ENCODE measurements at regions of chr1 and their contacts with region 1.

Region 1: GRCh38 chr1:26695356-26696118 is at the start of gene ARID1A:
- DNase-seq: peak; percentile 97
- H3K4me3 Mint-ChIP-seq: peak within 1 kb of the TSS; percentile 86
- H3K27ac Mint-ChIP-seq: peak within 1 kb of the TSS; percentile 98
- H3K4me1 Mint-ChIP-seq: peaks cover 25% of the 10 kb centered on the region
- H3K27me3 Mint-ChIP-seq: no peaks in the 10 kb centered on the region
- total RNA-seq, gene ARID1A: 64.3 to 67.8 TPM

Region 2: DNA sequence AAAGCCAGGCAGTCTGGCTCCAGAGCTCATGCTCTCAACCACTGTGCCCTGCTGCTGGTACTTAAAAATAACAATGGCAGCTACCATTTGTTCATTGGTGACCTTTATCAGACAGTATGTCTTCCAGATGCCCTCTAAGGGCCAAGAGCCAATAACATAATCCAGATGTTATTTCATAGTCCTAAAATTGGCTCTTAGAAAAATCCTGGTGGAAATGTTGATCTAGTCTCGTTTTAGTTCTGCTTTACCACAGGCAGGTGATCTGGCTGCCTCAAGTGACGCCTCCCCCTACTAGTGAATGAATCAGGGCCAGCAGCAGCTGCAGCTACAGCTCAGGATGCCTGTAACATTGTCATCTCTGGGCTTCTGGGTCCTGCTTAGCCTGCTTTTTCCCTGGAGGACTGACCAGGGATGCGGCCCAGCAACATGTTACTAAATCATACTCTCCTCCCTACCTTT is 235.9 kb before region 1 on chr1:
- CTCF ChIA-PET with region 1: no interaction called
- POLR2A ChIA-PET with region 1: no interaction called
- intact Hi-C with region 1: no loop called
- DNase-seq: no peak
- H3K4me3 Mint-ChIP-seq: no peak overlapping the region
- H3K27ac Mint-ChIP-seq: no peak overlapping the region
- H3K4me1 Mint-ChIP-seq: no peaks in the 10 kb centered on the region
- H3K27me3 Mint-ChIP-seq: no peaks in the 10 kb centered on the region

Region 3: DNA sequence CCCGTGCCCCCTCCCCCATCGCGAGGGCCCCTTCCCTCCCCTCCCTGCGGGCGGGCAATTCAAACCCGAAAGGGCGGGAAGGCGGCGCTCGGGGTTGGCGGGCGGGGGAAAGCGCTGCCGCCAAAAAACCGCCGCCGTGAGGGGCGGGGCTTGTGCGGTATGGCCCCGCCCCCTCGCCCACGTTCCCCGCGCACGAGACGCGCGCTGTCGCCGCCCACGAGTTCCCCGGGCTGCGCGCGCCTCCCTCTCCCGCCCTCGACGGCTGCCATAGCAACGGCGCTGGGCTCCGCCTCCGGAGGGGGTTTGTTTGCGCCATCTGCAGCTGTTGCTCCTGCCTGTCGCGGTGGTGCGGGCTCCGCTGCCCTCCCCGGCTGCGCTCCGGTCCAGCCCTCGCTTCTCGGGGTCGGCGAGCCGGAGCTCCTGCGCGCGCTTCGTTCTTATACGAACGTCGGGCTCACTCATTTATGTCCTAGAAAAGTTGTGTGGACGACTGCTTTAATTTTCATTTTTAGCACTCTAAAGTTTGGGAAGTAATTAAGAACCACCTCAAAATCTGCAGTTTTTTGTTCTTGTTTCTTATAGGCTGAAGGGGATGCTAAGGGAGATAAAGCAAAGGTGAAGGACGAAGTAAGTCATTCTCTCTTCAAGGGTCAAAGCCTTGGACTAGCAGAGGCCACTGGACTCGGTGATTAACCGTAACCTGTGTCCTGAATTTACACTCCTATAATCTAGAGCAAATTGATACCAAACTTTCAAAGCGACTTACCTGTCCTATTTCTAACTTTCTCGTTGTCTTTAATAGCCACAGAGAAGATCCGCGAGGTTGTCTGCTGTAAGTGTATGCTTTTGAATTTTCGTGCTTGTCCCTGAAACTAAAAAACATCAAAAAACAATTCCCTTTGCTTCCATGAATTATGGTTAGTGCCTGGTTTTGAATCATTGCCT is 222.4 kb before region 1 on chr1:
- CTCF ChIA-PET with region 1: no interaction called
- POLR2A ChIA-PET with region 1: no interaction called
- intact Hi-C with region 1: no loop called
- DNase-seq: peak; percentile 97
- H3K4me3 Mint-ChIP-seq: peak overlapping the region; percentile 89
- H3K27ac Mint-ChIP-seq: peak overlapping the region; percentile 74
- H3K4me1 Mint-ChIP-seq: peaks cover 50% of the 10 kb centered on the region
- H3K27me3 Mint-ChIP-seq: no peaks in the 10 kb centered on the region

Region 4: DNA sequence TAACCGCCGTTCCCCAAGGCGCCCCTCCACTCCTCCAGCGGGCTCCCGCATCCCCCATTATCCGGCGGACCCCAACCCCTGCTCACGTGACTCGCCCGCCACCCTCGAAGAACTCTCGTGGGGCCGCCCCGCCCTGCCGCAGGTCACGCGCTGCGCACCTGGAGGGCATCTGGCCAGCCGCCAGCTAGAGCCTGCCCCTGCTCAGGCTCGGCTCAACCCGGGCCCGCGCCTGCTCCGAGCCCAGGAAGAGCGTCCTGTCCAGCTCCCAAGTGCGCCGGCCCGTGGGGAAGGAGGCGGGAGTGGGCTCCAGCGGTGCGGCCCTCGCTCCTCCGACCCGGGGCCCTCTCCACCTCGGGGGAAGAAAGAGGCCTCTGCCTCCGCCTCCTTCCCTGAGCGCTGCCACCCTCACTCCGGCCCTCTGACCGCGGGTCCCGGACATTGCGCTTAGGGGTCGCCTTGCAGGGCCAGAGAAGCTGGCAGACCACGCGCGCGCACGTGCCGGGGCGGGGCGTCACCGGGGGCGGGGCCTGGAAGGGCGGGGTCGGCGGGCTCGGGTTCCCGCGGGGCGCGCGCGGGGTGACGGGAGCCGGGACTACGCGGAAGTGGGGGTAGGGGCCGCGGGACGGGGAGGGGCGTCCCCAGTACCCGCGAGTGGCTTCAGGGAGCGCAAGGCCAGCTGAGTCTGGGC is 194.9 kb before region 1 on chr1:
- CTCF ChIA-PET with region 1: interaction called, 11 read pairs
- POLR2A ChIA-PET with region 1: interaction called, 8 read pairs
- intact Hi-C with region 1: no loop called
- DNase-seq: peak; percentile 93
- H3K4me3 Mint-ChIP-seq: peak overlapping the region; percentile 88
- H3K27ac Mint-ChIP-seq: peak overlapping the region; percentile 93
- H3K4me1 Mint-ChIP-seq: peaks cover 8% of the 10 kb centered on the region
- H3K27me3 Mint-ChIP-seq: no peaks in the 10 kb centered on the region

Region 5: DNA sequence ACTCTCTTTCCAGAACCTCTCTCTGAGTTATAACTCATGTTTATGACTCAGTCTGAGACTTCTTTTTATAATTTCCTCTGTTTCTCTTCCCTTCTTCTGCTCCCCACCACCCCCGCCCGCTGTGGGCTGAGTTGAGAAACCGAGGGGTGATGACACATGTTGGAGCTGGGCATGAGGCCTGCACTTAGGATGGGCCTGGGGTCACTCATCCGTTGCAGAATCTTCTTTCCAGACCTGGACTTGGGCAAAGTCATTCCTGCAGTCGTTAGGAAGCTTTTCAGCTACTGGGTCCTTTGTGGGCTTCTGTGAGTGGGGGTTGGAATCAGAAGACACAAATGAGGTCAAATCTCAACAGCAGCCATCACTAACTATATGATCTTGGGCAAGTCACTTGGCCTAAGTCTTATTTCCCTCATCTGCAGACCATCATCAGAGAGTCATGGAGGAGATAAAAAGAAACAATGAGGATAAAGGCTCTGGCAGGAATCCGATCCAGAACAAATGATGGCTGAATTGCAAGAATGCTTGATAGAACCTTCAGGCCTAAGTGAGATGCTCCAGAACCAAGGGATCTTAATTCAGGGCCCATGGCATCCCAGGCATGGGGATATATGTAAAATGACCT is 112.6 kb before region 1 on chr1:
- CTCF ChIA-PET with region 1: no interaction called
- POLR2A ChIA-PET with region 1: interaction called, 17 read pairs
- intact Hi-C with region 1: loop called (anchors 5 kb)
- DNase-seq: peak; percentile 94
- H3K4me3 Mint-ChIP-seq: no peak overlapping the region
- H3K27ac Mint-ChIP-seq: peak overlapping the region; percentile 73
- H3K4me1 Mint-ChIP-seq: peaks cover 47% of the 10 kb centered on the region
- H3K27me3 Mint-ChIP-seq: no peaks in the 10 kb centered on the region

Region 6: GRCh38 chr1:26677306-26678115 is 18.0 kb before region 1 on chr1:
- CTCF ChIA-PET with region 1: interaction called, 11 read pairs
- POLR2A ChIA-PET with region 1: interaction called, 9 read pairs
- intact Hi-C with region 1: no loop called
- DNase-seq: peak; percentile 76
- H3K4me3 Mint-ChIP-seq: no peak overlapping the region
- H3K27ac Mint-ChIP-seq: no peak overlapping the region
- H3K4me1 Mint-ChIP-seq: peaks cover 18% of the 10 kb centered on the region
- H3K27me3 Mint-ChIP-seq: no peaks in the 10 kb centered on the region

Region 7: DNA sequence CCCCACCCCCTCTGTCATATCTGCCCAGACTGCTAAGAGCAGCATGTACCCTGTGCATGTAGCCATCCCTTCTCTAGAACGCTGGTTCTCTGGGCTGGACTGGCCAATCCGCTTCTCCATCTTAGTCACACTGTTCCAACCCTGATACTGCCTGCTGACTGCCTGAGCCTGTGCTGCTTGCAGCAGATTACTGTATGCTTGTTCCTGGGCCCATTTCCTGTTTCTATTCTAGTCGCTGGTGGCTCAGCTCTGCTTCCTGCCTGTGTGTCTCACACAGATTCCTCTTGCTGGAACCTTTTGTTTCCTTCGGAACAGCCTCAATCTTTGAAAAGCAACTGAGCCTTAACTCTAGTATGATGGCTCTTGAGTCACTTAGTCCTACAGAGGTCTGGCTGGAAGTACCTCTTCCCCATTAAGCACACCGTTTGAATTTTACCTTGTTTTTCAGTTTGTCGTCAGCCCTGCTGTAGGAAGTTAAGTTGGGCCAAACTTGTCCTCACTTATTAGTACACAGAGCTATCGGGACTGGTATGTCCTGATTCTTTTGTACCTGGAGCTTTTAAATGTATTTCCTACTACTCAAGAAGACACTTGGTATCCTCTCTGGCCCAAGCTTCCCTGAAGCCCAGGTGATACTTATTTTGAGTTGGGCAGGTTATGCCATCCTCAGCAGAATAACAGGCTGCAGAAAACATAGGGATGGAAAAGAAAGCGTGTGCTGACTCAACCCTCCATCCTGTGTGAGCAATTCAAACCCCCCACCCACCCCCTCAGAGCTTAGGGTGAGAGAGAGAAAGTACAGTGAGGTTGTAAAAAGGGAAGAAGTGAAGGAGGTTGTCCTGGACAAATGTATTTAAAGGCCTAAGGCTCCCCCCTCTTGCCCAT is 48.8 kb after region 1 on chr1:
- CTCF ChIA-PET with region 1: interaction called, 14 read pairs
- POLR2A ChIA-PET with region 1: interaction called, 91 read pairs
- intact Hi-C with region 1: loop called (anchors 1 kb)
- DNase-seq: peak; percentile 91
- H3K4me3 Mint-ChIP-seq: peak overlapping the region; percentile 48
- H3K27ac Mint-ChIP-seq: peak overlapping the region; percentile 92
- H3K4me1 Mint-ChIP-seq: peaks cover 83% of the 10 kb centered on the region
- H3K27me3 Mint-ChIP-seq: no peaks in the 10 kb centered on the region

Region 8: DNA sequence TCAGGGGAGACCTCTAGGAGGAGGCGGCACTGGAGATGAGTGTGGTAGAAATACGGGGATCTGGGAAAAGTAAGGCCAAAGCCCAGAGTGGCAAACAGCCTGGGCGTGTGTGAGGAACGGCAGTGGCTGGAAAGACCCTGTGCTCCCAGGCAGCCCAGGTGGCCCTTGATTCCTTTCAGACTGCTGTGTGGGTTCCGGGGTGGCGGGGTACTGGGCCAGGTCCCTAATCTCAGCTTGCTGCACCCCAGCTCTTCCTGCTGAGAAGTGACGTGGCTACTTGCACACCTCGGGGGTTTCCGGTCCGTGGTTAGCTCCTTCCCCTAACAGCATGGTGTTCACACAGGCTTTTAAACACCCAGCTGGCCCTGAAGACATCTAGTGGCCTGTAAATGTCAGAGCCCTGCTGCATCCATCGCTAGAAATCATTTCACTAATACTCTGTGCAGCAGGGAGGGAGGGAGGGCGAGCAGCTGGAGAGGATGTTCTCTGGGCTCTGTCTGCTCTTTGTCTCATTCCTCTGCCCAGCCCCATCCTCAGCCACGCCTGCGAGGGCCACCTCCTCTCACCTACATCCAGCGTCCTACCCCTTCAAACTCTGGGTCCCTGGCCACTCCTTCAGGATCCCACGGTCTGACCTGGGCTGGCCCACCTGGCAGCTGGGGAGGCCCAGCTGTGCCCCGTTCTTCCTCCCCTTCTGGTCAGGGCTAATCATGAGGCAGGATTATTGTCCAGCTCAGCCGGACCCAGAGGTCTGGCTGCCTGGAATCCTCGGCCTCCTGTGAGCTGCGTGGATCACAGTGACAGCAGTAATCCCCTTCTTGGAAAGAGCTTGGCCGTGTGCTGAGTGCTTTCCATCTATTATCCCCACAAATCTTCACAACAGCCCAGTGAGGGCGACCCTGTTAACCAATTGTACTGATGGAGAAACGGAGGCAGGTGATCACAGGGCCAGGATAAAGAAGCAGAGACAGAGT is 138.2 kb after region 1 on chr1:
- CTCF ChIA-PET with region 1: interaction called, 3 read pairs
- POLR2A ChIA-PET with region 1: interaction called, 3 read pairs
- intact Hi-C with region 1: loop called (anchors 1 kb)
- DNase-seq: peak; percentile 93
- H3K4me3 Mint-ChIP-seq: peak overlapping the region; percentile 72
- H3K27ac Mint-ChIP-seq: peak overlapping the region; percentile 100
- H3K4me1 Mint-ChIP-seq: peaks cover 78% of the 10 kb centered on the region
- H3K27me3 Mint-ChIP-seq: no peaks in the 10 kb centered on the region

Region 9: GRCh38 chr1:27428316-27429028 is 732.9 kb after region 1 on chr1:
- CTCF ChIA-PET with region 1: no interaction called
- POLR2A ChIA-PET with region 1: no interaction called
- intact Hi-C with region 1: no loop called
- DNase-seq: peak; percentile 37
- H3K4me3 Mint-ChIP-seq: peak overlapping the region; percentile 75
- H3K27ac Mint-ChIP-seq: peak overlapping the region; percentile 85
- H3K4me1 Mint-ChIP-seq: peaks cover 72% of the 10 kb centered on the region
- H3K27me3 Mint-ChIP-seq: no peaks in the 10 kb centered on the region